Testis (tissue), 5 donors: ENCODE measurements at regions of chr1 and their contacts with region 1.

Region 1: DNA sequence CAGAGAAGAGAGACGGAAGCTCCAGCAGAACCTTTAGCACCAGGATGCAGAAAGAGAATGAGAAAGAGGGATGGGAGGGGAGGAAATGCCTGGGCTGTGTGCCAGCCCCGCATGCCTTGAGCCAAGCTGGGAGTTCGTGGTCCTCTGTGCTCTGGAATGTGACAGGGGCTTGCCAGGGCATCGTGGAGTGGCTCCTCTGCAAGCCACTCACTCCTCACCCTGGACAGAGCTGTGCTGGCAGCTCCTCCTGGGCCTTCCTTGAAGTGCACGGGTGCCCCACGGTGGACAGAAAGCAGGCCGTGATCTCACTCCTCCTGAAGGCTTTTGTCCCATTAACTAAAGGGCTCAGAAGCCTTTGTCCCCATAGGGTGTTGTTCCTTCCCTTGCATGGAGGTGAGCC is 34.8 kb upstream of the PRELP start:
- DNase-seq: peak; percentile 82
- H3K4me3 ChIP-seq: no peak overlapping the region
- H3K27ac ChIP-seq: peak overlapping the region in 1 of 2 donors; percentile 73
- H3K4me1 ChIP-seq: peaks cover 12% of the 10 kb centered on the region
- H3K27me3 ChIP-seq: no peaks in the 10 kb centered on the region
- CTCF ChIP-seq: peak in 2 of 3 experiments; percentile 34 to 36
- POLR2A ChIP-seq: no peak

Region 2: GRCh38 chr1:203361945-203362719 is 78.6 kb before region 1 on chr1:
- intact Hi-C with region 1: no loop called
- DNase-seq: no peak
- H3K4me3 ChIP-seq: no peak overlapping the region
- H3K27ac ChIP-seq: no peak overlapping the region
- H3K4me1 ChIP-seq: no peaks in the 10 kb centered on the region
- H3K27me3 ChIP-seq: no peaks in the 10 kb centered on the region
- CTCF ChIP-seq: no peak
- POLR2A ChIP-seq: no peak

Region 3: DNA sequence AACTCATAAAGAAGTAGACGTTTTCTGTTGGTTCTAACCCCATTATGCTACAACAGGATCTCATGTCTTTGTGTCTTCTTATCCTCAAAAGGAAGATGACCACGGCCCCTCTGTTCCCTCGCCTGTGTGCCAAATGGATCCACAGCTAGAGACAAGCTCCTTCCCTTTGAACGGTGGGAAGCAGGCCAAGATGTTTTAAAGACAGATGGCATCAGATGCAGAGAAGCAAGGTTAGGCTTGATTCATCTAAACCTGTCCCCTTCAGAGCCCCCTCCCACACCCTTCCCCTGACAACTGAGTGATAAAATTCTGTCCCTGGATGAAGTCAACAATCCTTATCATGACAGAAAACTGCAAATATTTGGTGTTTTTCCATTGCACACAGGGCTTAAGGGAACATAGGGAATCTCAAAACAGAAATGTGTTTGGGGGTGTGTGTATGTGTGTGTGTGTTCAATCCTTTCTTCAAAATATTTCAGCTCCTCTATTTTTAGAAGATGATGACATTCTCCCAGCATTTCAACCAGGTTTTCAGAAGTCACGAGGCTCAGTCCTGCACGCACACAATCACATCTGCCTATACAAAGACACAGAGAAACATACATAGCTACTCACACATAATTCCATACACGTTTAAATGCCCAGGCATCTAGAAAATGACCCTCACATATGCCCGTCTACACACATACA is 62.1 kb before region 1 on chr1:
- intact Hi-C with region 1: loop called (anchors 10 kb)
- DNase-seq: no peak
- H3K4me3 ChIP-seq: no peak overlapping the region
- H3K27ac ChIP-seq: peak overlapping the region in 1 of 2 donors; percentile 42
- H3K4me1 ChIP-seq: peaks cover 15% of the 10 kb centered on the region
- H3K27me3 ChIP-seq: no peaks in the 10 kb centered on the region
- CTCF ChIP-seq: no peak
- POLR2A ChIP-seq: no peak

Region 4: DNA sequence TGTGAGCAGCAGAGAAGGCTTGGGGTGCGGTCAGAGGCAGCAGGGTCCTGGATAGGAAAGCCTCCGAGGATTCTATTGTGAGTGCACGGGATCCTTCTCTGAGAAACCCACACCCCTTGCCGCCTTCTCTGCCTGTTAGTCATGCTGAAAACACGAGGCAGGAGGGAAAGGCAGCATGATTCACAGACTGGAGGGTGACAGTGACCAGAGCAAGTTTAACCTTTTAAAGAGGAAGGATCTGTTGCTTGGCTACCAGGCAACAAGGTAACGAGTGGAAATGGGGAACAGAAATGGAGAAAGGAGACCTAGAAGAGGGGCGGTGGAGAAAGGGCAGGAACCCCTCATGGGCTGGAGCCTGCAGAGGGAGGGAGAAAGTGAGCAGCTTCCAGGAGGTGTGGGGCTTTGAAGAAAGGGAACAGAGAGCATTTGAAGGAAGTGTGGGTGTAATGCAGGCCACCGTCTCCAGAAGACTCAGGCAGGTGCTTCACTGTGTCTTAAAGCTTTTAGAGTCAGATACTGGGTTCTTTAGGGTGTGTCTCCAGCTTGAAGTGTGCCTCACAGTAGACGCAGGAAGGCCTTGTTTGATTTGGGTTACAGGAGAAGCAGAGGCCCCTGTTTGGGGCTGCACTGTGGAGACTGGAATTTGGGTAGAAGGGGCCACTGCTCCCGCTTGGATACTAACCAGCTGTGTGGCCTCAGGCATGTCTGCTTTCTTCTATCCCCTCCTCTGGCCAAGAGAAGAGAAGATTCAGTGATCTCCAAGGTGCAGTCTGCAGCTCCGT is 72.2 kb after region 1 on chr1:
- intact Hi-C with region 1: no loop called
- DNase-seq: no peak
- H3K4me3 ChIP-seq: no peak overlapping the region
- H3K27ac ChIP-seq: no peak overlapping the region
- H3K4me1 ChIP-seq: peaks cover 21% of the 10 kb centered on the region
- H3K27me3 ChIP-seq: no peaks in the 10 kb centered on the region
- CTCF ChIP-seq: no peak
- POLR2A ChIP-seq: no peak

Region 5: DNA sequence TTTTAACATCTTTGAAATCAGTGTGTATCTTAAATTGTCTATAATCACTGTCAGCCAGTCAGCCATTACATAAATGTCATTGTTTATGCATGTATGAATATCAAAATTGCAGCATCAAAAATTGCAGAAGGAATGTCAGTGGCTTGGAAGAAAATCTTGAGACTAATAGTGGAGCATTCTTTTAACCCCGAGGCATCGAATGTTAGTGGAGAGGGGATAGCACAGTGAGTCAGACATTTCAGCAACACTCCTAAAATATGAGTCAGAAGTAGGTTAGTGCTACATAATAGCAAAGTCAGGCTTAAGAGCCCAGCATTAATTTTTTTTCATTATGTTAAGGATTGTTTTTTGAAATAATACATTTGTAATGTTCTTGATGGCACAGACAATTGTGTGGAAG is 466.2 kb after region 1 on chr1:
- intact Hi-C with region 1: no loop called
- DNase-seq: no peak
- H3K4me3 ChIP-seq: no peak overlapping the region
- H3K27ac ChIP-seq: no peak overlapping the region
- H3K4me1 ChIP-seq: no peaks in the 10 kb centered on the region
- H3K27me3 ChIP-seq: no peaks in the 10 kb centered on the region
- CTCF ChIP-seq: no peak
- POLR2A ChIP-seq: no peak